HCT116 (cell line): ENCODE measurements at regions of chr10 and their contacts with region 1.

Region 1: GRCh38 chr10:24503461-24504320 is 220.0 kb downstream of the ARHGAP21 start:
- DNase-seq: peak; percentile 48
- ATAC-seq: peak; percentile 92
- H3K4me3 ChIP-seq: no peak overlapping the region
- H3K27ac ChIP-seq: no peak overlapping the region
- H3K4me1 ChIP-seq: no peaks in the 10 kb centered on the region
- H3K27me3 ChIP-seq: no peaks in the 10 kb centered on the region
- CTCF ChIP-seq: peak; percentile 67 to 87 (median 73)
- POLR2A ChIP-seq: no peak
- RAD21 ChIP-seq: peak; percentile 89

Region 2: DNA sequence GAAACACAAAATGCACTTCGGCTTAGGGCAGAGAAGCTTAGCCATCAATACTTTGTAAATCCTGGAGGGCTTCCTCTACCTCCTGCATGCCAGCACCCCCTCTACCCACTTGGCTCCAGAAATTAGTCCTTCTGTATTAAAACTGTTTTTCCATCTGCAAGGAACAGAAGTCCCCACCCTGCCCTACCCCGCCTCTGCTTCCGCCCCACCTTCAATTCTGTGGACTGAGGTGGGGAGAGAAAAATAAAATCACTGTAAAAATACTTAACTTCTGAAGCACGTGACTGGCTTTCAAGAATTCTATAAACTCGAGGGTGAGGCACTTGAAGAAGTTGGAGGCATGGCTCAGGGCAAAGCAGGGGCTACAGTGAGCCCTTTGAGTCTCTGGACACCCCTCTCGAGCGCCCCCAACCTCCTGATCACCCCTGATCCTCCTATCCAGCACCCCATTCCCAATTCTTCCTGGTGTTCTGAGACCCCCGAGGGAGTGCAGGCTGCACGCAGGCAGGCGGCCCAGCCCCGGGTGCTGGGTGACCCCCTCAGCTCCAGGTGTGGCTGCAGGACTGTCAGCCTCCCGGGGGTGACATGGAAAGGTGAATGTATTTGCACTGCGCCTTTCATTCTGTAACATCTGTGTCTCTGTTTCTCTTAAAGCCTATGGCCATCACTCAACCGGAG is 302.0 kb before region 1 on chr10:
- CTCF ChIA-PET with region 1: interaction called, 5 read pairs
- POLR2A ChIA-PET with region 1: no interaction called
- RAD21 ChIA-PET with region 1: no interaction called
- intact Hi-C with region 1: loop called (anchors 1 kb)
- DNase-seq: no peak
- ATAC-seq: no peak
- H3K4me3 ChIP-seq: no peak overlapping the region
- H3K27ac ChIP-seq: no peak overlapping the region
- H3K4me1 ChIP-seq: no peaks in the 10 kb centered on the region
- H3K27me3 ChIP-seq: 0 out of 2 replicates have a peak, but pooled peaks cover 2% of the 10 kb centered on the region
- CTCF ChIP-seq: no peak
- POLR2A ChIP-seq: no peak
- RAD21 ChIP-seq: no peak

Region 3: DNA sequence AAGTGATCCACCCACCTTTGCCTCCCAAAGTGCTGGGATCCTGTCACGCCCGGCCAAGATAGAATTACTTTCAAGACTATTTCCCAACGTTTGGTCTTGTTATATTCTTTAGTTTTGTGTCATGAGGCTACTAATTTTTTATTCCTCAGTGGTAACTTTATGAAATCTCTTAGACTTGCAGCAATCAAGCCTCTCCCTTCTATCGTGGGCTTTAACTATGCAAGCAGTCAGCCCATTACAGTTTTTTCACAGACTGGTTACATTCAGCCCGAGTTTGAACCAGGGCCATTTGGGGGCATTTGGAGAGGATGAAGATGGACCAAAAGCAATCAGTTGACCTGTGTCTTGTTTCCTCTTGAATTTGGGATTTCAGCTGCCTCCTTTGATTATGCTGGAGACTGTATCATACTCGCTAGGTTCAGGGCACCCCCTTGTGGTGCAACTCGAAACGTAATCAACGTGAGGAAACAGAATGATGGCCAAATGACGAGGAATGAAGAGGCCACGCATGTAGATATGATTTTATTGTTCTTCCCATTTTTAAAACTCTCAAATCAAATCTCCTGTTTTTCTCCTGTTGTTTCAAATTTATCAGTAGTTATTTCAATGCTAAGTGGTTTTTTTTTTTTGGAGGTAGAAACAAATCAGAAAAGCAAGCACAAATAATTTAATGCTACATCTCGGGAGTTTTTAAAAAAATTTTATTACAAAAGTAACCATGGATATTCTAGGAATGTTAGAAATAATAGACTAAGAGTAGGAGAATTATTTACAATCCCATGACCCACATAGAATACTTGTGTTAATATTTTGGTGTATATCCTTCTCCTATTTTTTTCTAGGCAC is 143.2 kb before region 1 on chr10:
- CTCF ChIA-PET with region 1: no interaction called
- POLR2A ChIA-PET with region 1: no interaction called
- RAD21 ChIA-PET with region 1: no interaction called
- intact Hi-C with region 1: loop called (anchors 10 kb)
- DNase-seq: peak; percentile 47
- ATAC-seq: peak; percentile 91
- H3K4me3 ChIP-seq: no peak overlapping the region
- H3K27ac ChIP-seq: no peak overlapping the region
- H3K4me1 ChIP-seq: no peaks in the 10 kb centered on the region
- H3K27me3 ChIP-seq: no peaks in the 10 kb centered on the region
- CTCF ChIP-seq: peak; percentile 19 to 77 (median 71); a peak in 5 of 6 replicates
- POLR2A ChIP-seq: no peak
- RAD21 ChIP-seq: peak; percentile 64

Region 4: GRCh38 chr10:24383681-24384106 is 120.0 kb before region 1 on chr10:
- CTCF ChIA-PET with region 1: no interaction called
- POLR2A ChIA-PET with region 1: no interaction called
- RAD21 ChIA-PET with region 1: no interaction called
- intact Hi-C with region 1: loop called (anchors 1 kb)
- DNase-seq: peak; percentile 81
- ATAC-seq: peak; percentile 85
- H3K4me3 ChIP-seq: no peak overlapping the region
- H3K27ac ChIP-seq: no peak overlapping the region
- H3K4me1 ChIP-seq: peaks cover 2 to 13% of the 10 kb centered on the region in 2 experiments; a peak in 2 of 4 replicates
- H3K27me3 ChIP-seq: 0 out of 2 replicates have a peak, but pooled peaks cover 5% of the 10 kb centered on the region
- CTCF ChIP-seq: peak; percentile 26 to 66 (median 65); a peak in 4 of 6 replicates
- POLR2A ChIP-seq: no peak
- RAD21 ChIP-seq: peak; percentile 56

Region 5: DNA sequence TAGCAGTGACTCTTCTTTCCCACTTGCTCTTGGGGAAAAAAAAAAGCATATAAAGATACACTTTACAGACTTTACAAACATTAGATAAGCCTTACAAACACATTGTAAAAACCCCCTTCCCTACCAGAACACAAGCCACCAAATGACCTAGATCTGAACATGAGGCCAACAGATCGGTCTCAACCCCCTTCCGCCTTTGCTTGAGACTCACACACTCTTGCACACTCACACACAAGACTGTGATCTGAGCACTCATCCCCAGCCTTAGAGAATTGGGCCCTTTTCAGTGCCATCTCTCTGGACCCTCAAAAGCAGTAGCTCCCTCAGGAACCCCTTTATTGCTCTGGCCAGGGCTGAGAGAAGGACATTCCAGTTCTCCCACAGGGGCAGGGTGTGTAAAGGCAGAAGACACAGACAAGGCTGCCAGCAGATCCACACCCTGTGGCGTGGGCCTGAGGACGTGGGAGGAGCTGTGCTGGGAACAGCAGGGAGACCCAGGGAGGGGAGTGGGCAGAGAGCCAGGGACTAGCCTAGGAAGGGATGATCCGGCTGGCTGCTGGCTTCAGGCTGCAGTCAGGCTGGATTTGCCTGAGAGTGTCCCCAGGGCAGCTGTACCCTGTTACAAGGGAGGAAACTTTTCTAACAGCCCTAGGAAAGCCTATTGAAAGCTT is 88.1 kb before region 1 on chr10:
- CTCF ChIA-PET with region 1: no interaction called
- POLR2A ChIA-PET with region 1: no interaction called
- RAD21 ChIA-PET with region 1: no interaction called
- intact Hi-C with region 1: loop called (anchors 5 kb)
- DNase-seq: no peak
- ATAC-seq: no peak
- H3K4me3 ChIP-seq: no peak overlapping the region
- H3K27ac ChIP-seq: no peak overlapping the region
- H3K4me1 ChIP-seq: no peaks in the 10 kb centered on the region
- H3K27me3 ChIP-seq: peaks cover 3% of the 10 kb centered on the region
- CTCF ChIP-seq: no peak
- POLR2A ChIP-seq: no peak
- RAD21 ChIP-seq: no peak

Region 6: DNA sequence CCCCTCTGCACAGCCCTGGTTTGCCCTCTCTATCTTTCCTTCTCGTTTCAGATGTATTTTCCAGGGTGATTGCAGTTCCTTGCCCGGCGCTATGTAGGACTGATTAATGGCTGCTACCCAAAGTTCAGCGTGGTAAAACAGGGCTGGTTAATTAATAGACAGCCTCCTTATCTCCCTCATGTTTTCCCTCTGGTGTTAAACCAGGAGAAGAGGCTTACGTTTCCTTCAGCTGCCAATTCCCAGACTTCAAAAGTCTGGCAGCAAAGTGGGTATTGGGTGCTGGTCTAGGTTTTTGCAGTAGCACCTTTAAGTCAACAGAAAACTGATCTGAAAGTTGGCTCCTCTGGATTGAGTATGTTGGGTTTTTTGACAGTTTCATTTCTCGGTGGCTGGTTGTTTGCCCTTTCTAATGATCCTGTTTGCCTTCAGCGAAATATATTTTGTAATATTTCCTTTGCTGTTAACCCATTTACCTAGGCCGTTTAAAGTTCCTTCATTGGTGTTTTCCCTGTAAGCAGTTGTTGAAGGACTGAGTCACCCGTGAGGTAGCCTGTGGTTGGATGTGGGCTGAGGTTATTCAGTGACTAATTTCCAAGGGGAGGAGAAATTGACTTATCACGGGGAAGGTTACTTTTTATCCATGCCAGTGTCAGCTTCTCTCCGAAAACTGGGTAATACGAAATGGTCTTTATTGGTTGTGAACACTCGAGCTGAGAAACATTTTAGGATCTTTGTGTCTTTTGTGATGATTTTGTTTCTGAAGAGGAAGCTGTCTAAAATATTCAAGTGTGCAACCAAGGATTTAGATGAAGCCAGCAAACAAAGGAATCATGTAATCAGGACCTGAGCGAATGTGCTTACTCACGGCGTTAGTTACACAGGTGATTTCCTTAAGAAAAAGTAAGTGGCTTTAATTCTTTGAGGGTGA is 37.5 kb before region 1 on chr10:
- CTCF ChIA-PET with region 1: interaction called, 6 read pairs
- POLR2A ChIA-PET with region 1: no interaction called
- RAD21 ChIA-PET with region 1: no interaction called
- intact Hi-C with region 1: loop called (anchors 1 kb)
- DNase-seq: peak; percentile 77
- ATAC-seq: peak; percentile 94
- H3K4me3 ChIP-seq: peak overlapping the region; percentile 49 to 59
- H3K27ac ChIP-seq: peak overlapping the region; percentile 25; the same call in 1 of the 2 replicates
- H3K4me1 ChIP-seq: peaks cover 7 to 27% of the 10 kb centered on the region in 2 experiments; a peak in 3 of 4 replicates
- H3K27me3 ChIP-seq: no peaks in the 10 kb centered on the region
- CTCF ChIP-seq: no peak
- POLR2A ChIP-seq: no peak
- RAD21 ChIP-seq: no peak